Uterus (tissue), 4 donors: ENCODE measurements at regions of chr4 and their contacts with region 1.

Region 1: DNA sequence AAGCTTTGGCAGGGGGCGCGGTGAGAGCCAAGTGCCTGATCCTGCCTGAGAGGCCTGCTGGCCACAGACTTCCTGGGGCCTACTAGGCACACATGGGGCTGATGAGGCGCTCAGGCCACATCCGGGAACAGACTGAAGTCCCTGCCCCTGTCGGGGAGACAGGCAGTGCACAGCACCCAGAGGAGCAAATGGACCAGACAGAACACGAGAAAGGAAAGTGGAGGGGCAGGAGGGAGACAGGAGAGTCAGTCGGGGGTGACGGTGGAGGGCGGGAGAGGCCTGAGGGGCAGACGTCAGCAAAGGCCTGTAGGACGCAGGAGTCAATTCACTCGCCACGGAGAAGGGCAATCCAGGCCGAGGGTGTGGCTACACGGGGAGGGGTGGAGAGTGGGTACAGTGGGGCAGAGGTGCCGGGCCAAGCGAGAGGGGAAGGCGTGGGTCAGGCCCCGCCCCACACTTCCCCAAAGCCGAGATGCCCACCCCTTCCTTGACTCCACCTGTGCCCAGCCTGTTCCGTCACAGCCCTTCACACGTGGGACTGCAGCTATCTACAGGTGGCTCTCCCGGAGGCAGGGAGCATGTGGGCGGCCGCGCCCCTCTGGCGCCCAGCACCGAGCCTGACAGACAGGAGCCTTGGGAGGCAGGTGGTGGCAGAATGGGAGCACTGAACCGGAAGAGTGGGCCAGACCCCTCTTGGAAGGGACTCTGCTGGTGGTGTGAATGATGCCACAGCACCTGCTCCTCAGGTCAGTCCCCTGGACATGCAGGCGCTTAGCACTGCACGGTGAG is 20.5 kb downstream of the NOP14 start:
- DNase-seq: no peak
- H3K4me3 ChIP-seq: no peak overlapping the region
- H3K27ac ChIP-seq: no peak overlapping the region
- H3K4me1 ChIP-seq: no peaks in the 10 kb centered on the region
- H3K27me3 ChIP-seq: no peaks in the 10 kb centered on the region
- CTCF ChIP-seq: no peak
- POLR2A ChIP-seq: no peak

Region 2: DNA sequence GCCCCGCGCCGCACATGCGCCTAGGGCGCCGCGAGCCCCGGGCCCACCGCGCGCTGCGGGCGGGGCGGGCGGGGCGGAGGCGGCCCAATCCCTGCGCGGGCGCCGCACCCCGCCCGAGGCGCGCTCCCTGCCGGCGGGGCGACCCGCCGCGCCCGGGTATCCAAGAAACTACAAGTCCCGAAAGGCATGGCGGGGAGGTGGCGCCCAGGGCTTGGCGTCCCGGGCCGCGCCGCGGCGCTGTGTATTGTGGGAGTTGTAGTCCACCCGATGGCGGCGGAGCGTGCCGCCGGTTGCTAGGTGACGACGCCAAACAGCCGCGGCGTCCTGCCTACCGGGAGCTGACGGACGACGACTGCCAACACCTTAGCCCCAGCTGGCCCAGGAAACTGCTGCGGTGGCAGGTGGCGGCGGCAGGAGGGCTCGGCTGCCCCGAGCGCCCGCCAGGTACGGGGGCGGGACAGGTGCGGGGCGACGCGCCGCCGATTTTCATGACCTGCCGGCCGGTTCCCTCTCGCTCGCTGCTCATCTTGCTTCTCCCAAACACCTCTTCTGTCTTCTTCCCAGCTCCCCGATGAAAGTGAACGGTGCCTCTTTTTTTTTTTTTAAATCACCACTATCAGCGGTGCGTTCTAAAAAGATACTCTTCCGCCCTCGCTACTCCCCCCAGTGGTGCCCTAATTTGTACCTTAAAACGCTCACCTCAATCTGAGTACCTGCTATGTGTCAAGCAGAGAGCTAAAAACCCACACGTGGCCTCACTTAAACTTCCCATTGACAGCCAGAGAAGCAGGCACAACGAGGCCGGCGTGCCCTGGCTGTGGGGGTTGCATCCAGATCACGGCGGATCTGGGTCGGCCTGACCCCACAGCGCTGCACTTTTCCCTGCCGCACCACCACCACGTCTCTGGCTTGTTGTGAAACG is 523.8 kb before region 1 on chr4 and contains the start of gene CFAP99:
- intact Hi-C with region 1: loop called (anchors 5 kb)
- DNase-seq: peak; percentile 93 to 94
- H3K4me3 ChIP-seq: peak within 1 kb of the TSS; percentile 33 to 64
- H3K27ac ChIP-seq: no peak within 1 kb of the TSS
- H3K4me1 ChIP-seq: peaks cover 0 to 4% of the 10 kb centered on the region in 2 donors
- H3K27me3 ChIP-seq: peaks cover 0 to 13% of the 10 kb centered on the region in 2 donors
- CTCF ChIP-seq: peak in 3 of 4 experiments; percentile 19 to 34 (median 33)
- POLR2A ChIP-seq: no peak
- total RNA-seq, gene CFAP99: 0.21 to 0.46 TPM in 2 of 4 donors, not detected in the others

Region 3: DNA sequence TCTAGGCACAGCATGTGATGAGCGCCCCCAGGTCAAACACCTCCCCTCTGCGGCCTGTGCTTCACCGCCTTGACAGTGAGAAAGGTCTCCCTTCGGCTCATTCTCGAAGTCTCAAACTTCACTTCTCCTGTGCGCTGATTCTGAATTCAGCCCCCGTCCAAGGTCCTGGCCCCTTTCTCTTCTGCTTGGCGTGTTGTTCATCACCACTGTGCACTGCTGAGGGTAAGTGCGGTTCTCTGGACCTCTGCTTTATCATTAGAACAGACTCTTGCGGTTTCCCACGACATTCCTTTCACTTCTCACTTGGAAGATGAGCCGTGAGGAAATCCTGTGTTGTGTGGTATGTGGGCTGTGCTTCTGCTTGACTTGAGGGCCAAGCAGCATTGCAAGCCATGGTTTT is 119.7 kb after region 1 on chr4:
- intact Hi-C with region 1: no loop called
- DNase-seq: no peak
- H3K4me3 ChIP-seq: no peak overlapping the region
- H3K27ac ChIP-seq: no peak overlapping the region
- H3K4me1 ChIP-seq: no peaks in the 10 kb centered on the region
- H3K27me3 ChIP-seq: no peaks in the 10 kb centered on the region
- CTCF ChIP-seq: no peak
- POLR2A ChIP-seq: no peak

Region 4: DNA sequence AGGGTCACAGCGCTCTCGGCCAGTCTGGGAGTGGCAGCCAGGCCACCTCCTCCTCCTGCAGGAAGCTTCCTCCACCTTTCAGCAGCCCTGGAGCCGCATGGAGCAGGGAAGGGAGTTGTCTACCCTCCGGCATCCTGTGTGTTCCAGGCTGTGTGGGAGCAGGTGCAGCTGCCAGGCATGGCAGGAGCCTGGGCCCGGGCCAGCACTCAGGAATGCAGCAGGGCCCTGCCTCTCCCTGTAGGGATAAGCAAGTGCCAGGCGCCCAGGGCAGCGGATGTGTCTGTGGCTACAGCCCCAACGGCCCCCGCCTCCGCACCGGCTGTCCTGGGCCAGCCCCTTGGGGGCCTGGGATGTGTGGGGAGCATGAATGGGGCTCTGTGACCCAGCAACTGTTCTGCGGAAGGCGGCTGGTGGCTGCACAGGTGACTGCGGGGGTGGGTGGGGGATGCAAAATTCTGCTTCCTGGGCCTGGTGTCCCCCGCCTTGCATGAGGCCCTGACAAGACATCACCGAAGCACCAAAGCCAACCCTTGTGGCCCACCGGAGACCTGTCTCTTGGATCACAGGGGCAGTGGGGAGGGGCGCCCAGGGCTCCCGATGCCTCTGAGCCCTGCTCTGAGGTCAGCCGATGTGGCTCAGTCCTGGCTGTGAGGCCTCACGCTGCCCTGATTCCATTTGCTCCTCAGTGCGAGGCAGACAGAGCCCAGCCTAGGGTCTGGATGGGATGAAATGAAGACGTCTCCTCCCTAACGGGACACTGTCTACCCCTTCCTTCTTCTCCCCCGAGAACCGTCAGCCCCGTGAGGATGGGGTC is 519.0 kb after region 1 on chr4:
- intact Hi-C with region 1: no loop called
- DNase-seq: no peak
- H3K4me3 ChIP-seq: no peak overlapping the region
- H3K27ac ChIP-seq: no peak overlapping the region
- H3K4me1 ChIP-seq: peaks cover 0 to 4% of the 10 kb centered on the region in 2 donors
- H3K27me3 ChIP-seq: no peaks in the 10 kb centered on the region
- CTCF ChIP-seq: no peak
- POLR2A ChIP-seq: no peak